A549 (cell line): ENCODE measurements at regions of chr2 and their contacts with region 1.

Region 1: GRCh38 chr2:11681722-11682589 is 12.0 kb upstream of the NTSR2 start:
- DNase-seq: peak; percentile 43 to 94
- ATAC-seq: peak; percentile 41 to 85; a peak in 3 of 6 replicates
- H3K4me3 ChIP-seq: no peak overlapping the region
- H3K27ac ChIP-seq: no peak overlapping the region
- H3K4me1 ChIP-seq: peaks cover 4% of the 10 kb centered on the region; the same call in 1 of the 3 replicates
- CTCF ChIP-seq: peak; percentile 80
- EP300 ChIP-seq: no peak
- POLR2A ChIP-seq: no peak
- RAD21 ChIP-seq: peak; percentile 70 to 81

Region 2: GRCh38 chr2:11539317-11540152 is 142.4 kb before region 1 on chr2:
- CTCF ChIA-PET with region 1: no interaction called
- POLR2A ChIA-PET with region 1: no interaction called
- DNase-seq: no peak
- ATAC-seq: peak in 1 of 2 experiments; percentile 30; a peak in 3 of 6 replicates
- H3K4me3 ChIP-seq: no peak overlapping the region
- H3K27ac ChIP-seq: no peak overlapping the region; a peak in 1 of 6 replicates
- H3K4me1 ChIP-seq: no peaks in the 10 kb centered on the region
- CTCF ChIP-seq: no peak
- EP300 ChIP-seq: no peak
- POLR2A ChIP-seq: no peak
- RAD21 ChIP-seq: no peak

Region 3: DNA sequence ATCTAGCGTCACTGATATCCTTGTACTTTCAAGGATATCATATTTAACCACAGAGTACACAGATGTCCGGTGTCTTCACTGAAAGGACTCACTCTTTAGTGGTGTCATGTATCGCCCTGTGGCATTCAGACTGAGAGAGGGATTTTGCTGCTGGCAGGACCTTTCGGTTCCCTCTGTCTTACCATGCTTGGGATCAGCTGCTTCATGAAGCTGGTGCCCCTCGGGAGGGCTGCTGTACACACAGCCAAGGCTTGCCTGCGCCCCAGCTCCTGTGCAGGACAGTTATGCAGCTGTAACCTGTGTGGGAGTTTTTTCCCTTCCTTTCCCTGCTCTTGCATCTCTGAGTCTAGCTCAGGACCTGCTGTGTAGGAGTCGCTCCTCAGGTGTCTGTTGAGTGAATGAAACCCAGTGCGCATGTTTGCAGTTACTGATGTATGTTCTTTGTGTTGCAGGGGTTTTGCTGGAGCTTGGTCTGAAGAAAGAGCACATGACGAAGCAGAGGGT is 83.7 kb before region 1 on chr2:
- CTCF ChIA-PET with region 1: interaction called, 12 read pairs
- POLR2A ChIA-PET with region 1: no interaction called
- DNase-seq: no peak
- ATAC-seq: peak; percentile 58 to 62; a peak in 5 of 6 replicates
- H3K4me3 ChIP-seq: no peak overlapping the region
- H3K27ac ChIP-seq: no peak overlapping the region
- H3K4me1 ChIP-seq: no peaks in the 10 kb centered on the region
- CTCF ChIP-seq: no peak
- EP300 ChIP-seq: no peak
- POLR2A ChIP-seq: no peak
- RAD21 ChIP-seq: no peak

Region 4: GRCh38 chr2:11647834-11648600 is 33.9 kb before region 1 on chr2:
- CTCF ChIA-PET with region 1: interaction called, 14 read pairs
- POLR2A ChIA-PET with region 1: no interaction called
- DNase-seq: no peak
- ATAC-seq: 0 out of 6 replicates have a peak, but pooled peaks of 1 of the 2 experiments have one; percentile 38
- H3K4me3 ChIP-seq: no peak overlapping the region
- H3K27ac ChIP-seq: no peak overlapping the region
- H3K4me1 ChIP-seq: no peaks in the 10 kb centered on the region
- CTCF ChIP-seq: no peak
- EP300 ChIP-seq: no peak
- POLR2A ChIP-seq: no peak
- RAD21 ChIP-seq: peak in 1 of 2 experiments; percentile 22; a peak in 1 of 5 replicates

Region 5: DNA sequence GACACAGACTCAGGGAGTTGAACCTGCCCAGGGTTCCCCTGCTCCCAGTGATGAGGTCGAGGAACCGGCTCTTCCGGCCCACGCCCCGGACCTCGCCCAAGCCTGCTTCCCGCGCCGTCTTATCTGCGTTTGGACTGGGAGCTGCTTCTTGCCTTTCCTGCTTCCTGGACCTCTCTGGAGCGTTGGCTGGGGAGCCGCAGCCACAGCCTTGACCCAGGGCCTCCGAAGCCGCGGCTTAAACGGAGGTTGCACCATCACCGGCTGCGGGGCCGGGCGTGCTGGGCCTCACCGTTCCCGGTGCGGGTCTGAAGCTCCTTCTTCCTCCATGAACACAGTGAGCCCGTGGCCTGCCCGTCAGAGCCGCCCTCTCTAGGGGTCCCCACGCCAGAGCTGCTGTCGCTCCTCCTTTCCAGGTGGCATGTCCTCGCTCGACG is 25.3 kb before region 1 on chr2:
- CTCF ChIA-PET with region 1: interaction called, 14 read pairs
- POLR2A ChIA-PET with region 1: no interaction called
- DNase-seq: no peak
- ATAC-seq: no peak
- H3K4me3 ChIP-seq: no peak overlapping the region
- H3K27ac ChIP-seq: no peak overlapping the region
- H3K4me1 ChIP-seq: no peaks in the 10 kb centered on the region
- CTCF ChIP-seq: no peak
- EP300 ChIP-seq: no peak
- POLR2A ChIP-seq: no peak
- RAD21 ChIP-seq: no peak

Region 6: DNA sequence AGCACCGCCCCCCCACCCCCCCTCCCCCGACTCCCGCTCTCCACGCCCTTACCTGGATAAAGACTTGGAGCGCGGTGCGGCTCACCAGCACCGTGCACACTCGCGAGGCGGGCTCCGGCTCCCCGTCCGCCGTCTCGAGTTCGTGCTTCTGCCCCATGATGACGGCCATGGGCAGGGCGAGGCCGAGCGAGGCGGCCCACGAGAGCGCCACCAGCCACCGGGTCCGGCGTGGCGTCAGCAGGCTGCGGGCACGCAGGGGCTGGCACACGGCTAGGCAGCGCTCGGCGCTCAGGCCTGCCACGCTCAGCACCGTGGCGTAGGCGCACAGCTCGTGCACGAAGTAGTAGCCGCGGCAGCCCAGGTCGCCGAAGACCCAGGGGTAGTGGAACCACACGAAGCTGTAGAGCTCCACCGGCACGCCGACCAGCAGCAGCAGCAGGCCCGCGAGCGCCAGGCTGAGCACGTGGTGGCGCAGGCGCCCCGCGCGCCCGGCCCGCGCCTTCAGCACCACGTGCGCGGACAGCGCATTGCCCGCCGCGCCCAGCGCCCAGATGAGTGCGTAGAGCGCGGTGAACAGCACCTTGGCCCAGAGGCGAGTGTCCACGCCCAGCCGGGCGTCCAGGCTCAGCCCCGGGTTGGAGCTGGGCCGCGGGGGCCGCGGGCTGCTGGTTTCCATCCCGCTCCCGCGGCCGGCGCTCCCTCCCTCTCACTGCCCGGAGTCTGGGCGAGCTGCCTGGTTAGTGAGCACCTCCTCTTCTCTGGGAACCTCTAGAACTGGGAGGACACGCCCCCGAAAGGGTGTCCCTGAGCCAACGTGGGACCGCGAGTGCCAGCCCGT is 12.3 kb before region 1 on chr2 and contains the start of gene NTSR2:
- CTCF ChIA-PET with region 1: interaction called, 17 read pairs
- POLR2A ChIA-PET with region 1: no interaction called
- DNase-seq: peak; percentile 49 to 68
- ATAC-seq: peak; percentile 84 to 94
- H3K4me3 ChIP-seq: no peak within 1 kb of the TSS
- H3K27ac ChIP-seq: no peak within 1 kb of the TSS
- H3K4me1 ChIP-seq: peaks cover 3% of the 10 kb centered on the region; the same call in 1 of the 3 replicates
- CTCF ChIP-seq: no peak
- EP300 ChIP-seq: no peak
- POLR2A ChIP-seq: no peak
- RAD21 ChIP-seq: no peak
- polyA plus RNA-seq, gene NTSR2: not detected in 2 replicates